ENCODE measurements at regions of chr3 and their contacts with region 1.

Region 1: DNA sequence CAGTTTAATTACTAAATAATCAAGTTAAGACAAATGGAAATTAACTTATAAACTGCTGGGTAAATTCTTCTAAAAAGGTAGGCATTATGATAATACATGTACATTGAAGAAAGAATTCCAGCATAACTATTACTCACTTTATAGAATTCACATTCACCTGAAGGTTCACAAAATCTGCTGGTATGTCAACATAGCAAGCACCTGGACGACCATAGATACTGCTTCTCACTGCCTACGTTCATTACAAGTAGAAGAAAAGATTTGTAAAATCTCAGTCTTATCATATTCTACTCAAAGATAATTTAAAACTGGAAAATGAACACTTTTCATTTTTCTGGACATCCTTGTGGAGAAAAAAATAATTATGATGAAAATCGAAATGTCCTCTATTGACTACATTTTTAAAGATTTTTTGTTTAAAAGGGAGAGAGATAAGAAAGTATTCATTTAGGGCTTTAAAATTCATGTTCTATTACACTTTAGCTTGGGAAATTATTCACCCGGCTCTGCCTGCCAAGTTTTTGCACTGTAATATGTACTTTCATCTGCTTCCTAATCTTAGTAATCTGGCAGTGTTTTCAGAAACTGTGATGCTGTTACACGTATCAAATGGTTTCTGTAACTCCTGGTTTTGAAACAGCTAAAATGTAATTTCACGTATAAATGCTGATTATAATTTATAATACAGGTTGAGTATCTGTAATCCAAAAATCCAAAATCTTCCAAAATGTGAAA is 16.1 kb downstream of the HACL1 start:
- DNase-seq: no peak
- ATAC-seq: no peak

Region 2: DNA sequence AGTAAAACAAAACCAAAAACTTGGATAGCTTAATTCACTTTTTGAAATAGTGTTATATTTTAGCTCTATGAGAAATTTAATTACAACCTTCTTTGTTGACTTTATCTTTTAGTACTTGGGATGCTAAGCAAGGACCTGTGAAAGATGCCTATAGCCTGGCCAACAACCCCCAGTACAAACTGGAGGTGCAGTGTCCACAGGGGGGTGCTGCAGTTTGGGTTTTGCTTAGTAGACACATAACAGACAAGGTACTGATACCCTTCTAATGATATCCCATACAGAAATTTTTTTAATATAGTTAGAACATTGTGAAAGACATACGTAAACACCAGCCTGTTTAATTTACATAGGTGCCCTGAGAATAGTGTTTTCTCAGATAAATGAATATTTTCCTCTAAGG is 343.9 kb before region 1 on chr3:
- intact Hi-C with region 1: loop called (anchors 10 kb)
- DNase-seq: no peak
- ATAC-seq: no peak

Region 3: DNA sequence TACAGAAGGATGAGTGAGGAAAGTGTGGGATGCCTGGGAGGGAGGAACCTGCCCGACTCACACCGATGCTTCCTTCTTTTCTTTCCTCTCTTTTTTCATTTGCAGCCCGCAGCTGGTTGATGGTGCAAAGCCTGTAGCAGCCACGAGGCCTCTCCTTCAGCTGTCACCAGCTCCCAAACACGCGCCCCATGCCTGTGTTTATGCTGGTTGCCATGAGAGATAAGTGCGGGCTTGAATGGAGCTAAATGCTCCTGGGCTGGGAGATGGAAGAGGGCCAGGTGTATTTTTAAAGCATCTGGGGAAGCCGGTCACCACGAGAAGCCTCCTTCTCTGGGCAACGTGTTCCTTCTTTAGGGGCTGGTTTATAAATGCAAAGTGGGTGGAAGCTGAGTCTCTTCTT is 73.1 kb before region 1 on chr3:
- intact Hi-C with region 1: no loop called
- DNase-seq: peak; percentile 83
- ATAC-seq: peak; percentile 99

Measured in left ventricle myocardium superior (tissue), 1 donor.